Lower leg skin (tissue), 4 donors: ENCODE measurements at regions of chr17 and their contacts with region 1.

Region 1: GRCh38 chr17:7989781-7990655 is 12.4 kb upstream of the GUCY2D start:
- DNase-seq: peak; percentile 77 to 98
- H3K4me3 ChIP-seq: peak overlapping the region; percentile 46
- CTCF ChIP-seq: peak in 1 of 3 donors; percentile 58
- POLR2A ChIP-seq: no peak

Region 2: GRCh38 chr17:7740481-7741001 is 249.5 kb before region 1 on chr17:
- intact Hi-C with region 1: loop called (anchors 5 kb)
- DNase-seq: no peak
- H3K4me3 ChIP-seq: no peak overlapping the region
- CTCF ChIP-seq: no peak
- POLR2A ChIP-seq: no peak

Region 3: GRCh38 chr17:7763919-7764318 is 226.1 kb before region 1 on chr17:
- intact Hi-C with region 1: no loop called
- DNase-seq: no peak
- H3K4me3 ChIP-seq: no peak overlapping the region
- CTCF ChIP-seq: no peak
- POLR2A ChIP-seq: no peak

Region 4: DNA sequence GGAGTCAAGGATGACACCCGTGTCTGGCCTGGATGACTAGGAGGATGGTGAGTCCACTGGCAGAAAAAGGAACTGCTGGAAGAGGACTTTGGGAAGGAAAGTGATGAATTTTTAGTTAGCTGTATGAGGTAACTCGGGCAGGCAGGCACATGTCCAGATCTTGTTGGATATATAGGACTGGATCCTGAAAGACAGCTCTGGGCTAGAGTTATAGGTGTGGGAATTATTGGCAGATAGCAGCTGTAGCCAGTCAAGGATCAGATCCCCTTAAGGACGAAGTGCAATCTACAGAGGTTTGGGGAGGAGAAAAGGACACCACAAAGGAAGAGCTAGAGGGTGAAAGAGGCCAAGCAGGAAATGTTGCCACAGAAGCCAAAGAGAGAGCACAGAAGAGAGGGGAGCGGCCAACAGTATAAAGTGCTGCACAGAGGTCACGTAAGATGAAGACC is 122.1 kb before region 1 on chr17:
- intact Hi-C with region 1: loop called (anchors 5 kb)
- DNase-seq: peak in 1 of 2 donors; percentile 48
- H3K4me3 ChIP-seq: no peak overlapping the region
- CTCF ChIP-seq: no peak
- POLR2A ChIP-seq: no peak

Region 5: GRCh38 chr17:7912927-7913524 is 77.0 kb before region 1 on chr17:
- intact Hi-C with region 1: loop called (anchors 5 kb)
- DNase-seq: peak in 1 of 2 donors; percentile 46
- H3K4me3 ChIP-seq: no peak overlapping the region
- CTCF ChIP-seq: peak in 1 of 3 donors; percentile 34
- POLR2A ChIP-seq: no peak